Activated naive CD4-positive, alpha-beta T cell treated with anti-CD3 and anti-CD28 coated beads for 36 hours (primary cell): ENCODE measurements at regions of chr7 and their contacts with region 1.

Region 1: DNA sequence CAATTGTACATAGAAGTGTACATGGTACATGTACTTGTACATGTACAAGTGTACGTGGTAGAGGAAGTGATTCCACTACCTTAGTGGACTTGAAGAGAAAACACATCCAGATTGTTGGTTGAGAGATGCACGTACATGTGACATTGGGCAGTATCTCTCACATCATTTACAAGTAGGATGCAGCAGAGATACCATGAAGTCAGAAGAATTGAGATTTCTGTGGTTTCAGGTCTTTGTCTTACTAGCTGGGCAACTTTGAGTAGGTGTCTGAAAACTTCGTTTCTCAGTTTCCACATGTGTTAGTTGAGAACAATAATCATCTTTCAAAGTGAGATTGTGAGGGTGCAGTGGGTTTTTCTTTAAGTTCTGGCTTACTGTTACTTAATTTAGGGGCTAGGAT is 21.5 kb downstream of the CLDN12 start:
- DNase-seq: peak; percentile 11
- H3K4me3 Mint-ChIP-seq: peak overlapping the region; percentile 16
- H3K27ac Mint-ChIP-seq: peak overlapping the region; percentile 79
- H3K4me1 Mint-ChIP-seq: peaks cover 16% of the 10 kb centered on the region
- H3K27me3 Mint-ChIP-seq: peaks cover 2% of the 10 kb centered on the region

Region 2: DNA sequence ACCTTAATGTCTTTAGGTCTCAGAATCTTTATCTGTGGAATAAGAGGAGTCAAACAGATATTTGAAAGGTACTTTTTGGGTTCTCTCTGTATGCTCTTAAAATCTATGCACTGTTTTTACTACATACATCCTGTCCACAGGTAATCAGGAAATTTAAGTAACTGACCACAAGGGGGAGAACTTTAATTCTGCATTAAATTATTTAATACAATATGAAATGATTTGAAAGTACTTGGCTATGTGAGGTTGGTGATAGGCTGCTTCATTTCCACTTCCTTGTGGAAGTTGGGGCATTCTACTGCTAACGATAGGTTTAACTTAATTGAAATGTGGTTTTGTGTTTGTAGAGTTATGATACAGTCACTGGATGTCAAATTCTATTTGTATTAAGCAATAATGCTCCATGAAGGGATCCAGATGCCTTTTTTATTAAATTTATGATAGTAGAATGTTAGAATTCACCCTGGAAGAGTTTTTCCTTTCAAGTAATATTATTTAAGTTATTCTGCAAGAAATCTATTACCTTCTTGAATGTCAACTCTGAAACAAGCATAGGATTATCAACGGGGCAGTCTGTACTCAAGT is 1635.1 kb before region 1 on chr7:
- CTCF ChIA-PET with region 1: no interaction called
- intact Hi-C with region 1: loop called (anchors 5 kb)
- DNase-seq: no peak
- H3K4me3 Mint-ChIP-seq: no peak overlapping the region
- H3K27ac Mint-ChIP-seq: no peak overlapping the region
- H3K4me1 Mint-ChIP-seq: no peaks in the 10 kb centered on the region
- H3K27me3 Mint-ChIP-seq: no peaks in the 10 kb centered on the region

Region 3: DNA sequence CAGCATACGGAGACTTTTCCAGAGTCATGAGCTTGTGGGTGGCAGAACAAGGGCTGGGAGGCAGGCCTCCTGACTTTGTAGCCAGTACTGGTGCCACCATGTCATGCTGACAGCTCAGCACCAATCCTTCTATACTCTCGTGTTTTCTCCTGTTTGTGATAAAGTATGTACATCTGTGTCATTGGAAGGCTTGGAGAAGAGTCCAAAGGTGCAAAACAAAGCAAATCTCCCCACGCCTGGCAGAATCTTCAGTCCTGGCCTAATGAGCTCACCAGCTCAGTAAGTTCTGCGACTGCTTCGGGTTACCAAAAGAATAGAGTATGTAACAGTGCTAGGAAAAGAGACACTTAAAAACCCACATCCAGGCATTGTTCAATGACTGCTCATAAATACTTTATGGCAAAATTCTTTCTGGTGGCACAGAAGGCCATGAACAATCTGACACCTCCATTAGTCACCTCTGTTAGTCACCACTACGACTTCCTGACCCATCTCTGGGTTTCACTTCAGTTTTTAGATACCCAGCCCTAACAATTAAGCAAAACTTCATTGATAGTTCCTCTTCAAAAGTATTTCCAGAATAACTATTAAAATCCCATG is 245.9 kb before region 1 on chr7:
- CTCF ChIA-PET with region 1: no interaction called
- intact Hi-C with region 1: loop called (anchors 1 kb)
- DNase-seq: peak; percentile 63
- H3K4me3 Mint-ChIP-seq: peak overlapping the region; percentile 17
- H3K27ac Mint-ChIP-seq: peak overlapping the region; percentile 94
- H3K4me1 Mint-ChIP-seq: peaks cover 35% of the 10 kb centered on the region
- H3K27me3 Mint-ChIP-seq: peaks cover 8% of the 10 kb centered on the region

Region 4: GRCh38 chr7:90262438-90262837 is 162.3 kb before region 1 on chr7:
- CTCF ChIA-PET with region 1: interaction called, 10 read pairs
- intact Hi-C with region 1: loop called (anchors 1 kb)
- DNase-seq: no peak
- H3K4me3 Mint-ChIP-seq: no peak overlapping the region
- H3K27ac Mint-ChIP-seq: no peak overlapping the region
- H3K4me1 Mint-ChIP-seq: no peaks in the 10 kb centered on the region
- H3K27me3 Mint-ChIP-seq: peaks cover 3% of the 10 kb centered on the region

Region 5: DNA sequence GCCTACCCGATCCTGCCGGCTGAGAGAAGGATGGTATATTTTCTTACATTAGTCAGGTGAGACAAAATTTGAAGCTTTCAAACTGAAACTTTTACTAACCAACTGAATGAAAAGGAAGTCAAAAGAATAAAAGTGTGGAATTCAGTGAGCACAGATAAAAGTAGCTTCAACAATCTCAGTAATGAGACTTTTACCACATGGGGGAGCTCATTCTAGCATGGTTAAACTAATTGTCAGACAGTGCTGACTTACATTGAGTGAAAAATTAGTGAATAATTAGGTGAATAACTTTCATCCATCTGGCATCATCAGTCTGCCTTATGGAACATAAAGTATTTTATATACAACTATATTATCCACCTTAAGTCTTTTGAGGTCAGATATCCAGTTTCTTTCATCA is 112.0 kb before region 1 on chr7:
- CTCF ChIA-PET with region 1: interaction called, 37 read pairs
- intact Hi-C with region 1: loop called (anchors 1 kb)
- DNase-seq: no peak
- H3K4me3 Mint-ChIP-seq: no peak overlapping the region
- H3K27ac Mint-ChIP-seq: no peak overlapping the region
- H3K4me1 Mint-ChIP-seq: no peaks in the 10 kb centered on the region
- H3K27me3 Mint-ChIP-seq: peaks cover 15% of the 10 kb centered on the region

Region 6: GRCh38 chr7:90403174-90404113 is 21.3 kb before region 1 on chr7 and contains the start of gene CLDN12:
- CTCF ChIA-PET with region 1: interaction called, 4 read pairs
- intact Hi-C with region 1: loop called (anchors 1 kb)
- DNase-seq: peak; percentile 95
- H3K4me3 Mint-ChIP-seq: peak within 1 kb of the TSS; percentile 95
- H3K27ac Mint-ChIP-seq: peak within 1 kb of the TSS; percentile 97
- H3K4me1 Mint-ChIP-seq: peaks cover 4% of the 10 kb centered on the region
- H3K27me3 Mint-ChIP-seq: no peaks in the 10 kb centered on the region
- total RNA-seq, gene CLDN12: 14.8 to 15.3 TPM